Naive thymus-derived CD4-positive, alpha-beta T cell (primary cell): ENCODE measurements at regions of chr11 and their contacts with region 1.

Region 1: DNA sequence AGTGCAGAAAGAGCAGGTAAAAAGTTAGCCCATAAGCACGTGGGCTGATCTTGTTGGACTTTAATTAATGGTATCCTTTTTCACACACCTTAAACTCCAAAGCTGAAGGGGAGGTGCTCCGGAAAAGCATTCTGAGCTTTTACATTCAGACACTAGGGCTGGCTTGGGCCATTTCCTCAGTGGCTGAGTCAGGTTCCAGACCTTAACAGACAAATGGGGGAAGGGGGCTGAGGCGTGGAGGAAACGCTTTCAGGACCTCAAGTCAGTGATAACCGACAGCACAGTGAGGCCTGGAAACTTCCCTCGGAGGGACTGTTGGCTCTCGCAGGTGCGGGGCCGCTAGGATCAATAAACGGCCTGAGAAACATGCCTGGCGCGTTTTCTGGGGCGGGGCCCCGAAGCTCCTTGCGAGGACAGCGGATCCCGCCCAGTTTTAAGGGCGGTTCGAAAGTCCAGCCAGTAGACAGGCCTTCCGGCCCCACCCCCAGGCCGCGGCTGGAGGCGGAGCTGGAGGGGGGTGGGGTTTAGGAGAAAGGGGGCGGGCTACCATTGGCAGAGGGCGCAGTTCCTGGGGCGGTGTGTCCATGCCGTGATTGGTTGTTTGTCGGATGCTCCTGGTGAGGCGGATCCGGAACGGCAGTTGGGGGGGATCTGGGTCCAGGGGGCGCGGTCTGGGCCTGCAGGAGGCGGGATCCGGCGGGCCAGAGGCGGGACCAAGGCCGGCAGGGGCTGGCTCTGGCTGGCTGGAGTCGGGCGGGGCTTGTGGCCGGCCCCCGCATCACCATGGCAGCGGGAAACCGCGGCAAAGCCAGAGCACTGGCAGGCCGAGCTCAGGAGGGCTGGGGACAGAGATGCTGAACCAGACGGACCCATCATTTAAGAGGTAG is 8.0 kb downstream of the C11orf52 start:
- DNase-seq: peak; percentile 91 to 98 (median 96)
- ATAC-seq: peak; percentile 96
- H3K4me3 ChIP-seq: peak overlapping the region; percentile 61
- H3K4me3 Mint-ChIP-seq: peak overlapping the region; percentile 76 to 91 (median 87)
- H3K27ac ChIP-seq: peak overlapping the region; percentile 76
- H3K27ac Mint-ChIP-seq: peak overlapping the region; percentile 83 to 96 (median 92)
- H3K4me1 ChIP-seq: peaks cover 0 to 5% of the 10 kb centered on the region in 2 donors
- H3K4me1 Mint-ChIP-seq: peaks cover 0 to 19% (median 16%) of the 10 kb centered on the region in 7 donors
- H3K27me3 ChIP-seq: no peaks in the 10 kb centered on the region
- H3K27me3 Mint-ChIP-seq: peaks cover 0 to 5% (median 0%) of the 10 kb centered on the region in 5 donors

Region 2: GRCh38 chr11:111793863-111794262 is 132.9 kb before region 1 on chr11:
- CTCF ChIA-PET with region 1: no interaction called
- POLR2A ChIA-PET with region 1: no interaction called
- intact Hi-C with region 1: no loop called
- DNase-seq: no peak
- ATAC-seq: no peak
- H3K4me3 ChIP-seq: no peak overlapping the region
- H3K4me3 Mint-ChIP-seq: no peak overlapping the region
- H3K27ac ChIP-seq: no peak overlapping the region
- H3K27ac Mint-ChIP-seq: peak overlapping the region in 1 of 9 donors; percentile 14
- H3K4me1 ChIP-seq: no peaks in the 10 kb centered on the region
- H3K4me1 Mint-ChIP-seq: peaks cover 0 to 7% (median 3%) of the 10 kb centered on the region in 7 donors
- H3K27me3 ChIP-seq: no peaks in the 10 kb centered on the region
- H3K27me3 Mint-ChIP-seq: no peaks in the 10 kb centered on the region

Region 3: DNA sequence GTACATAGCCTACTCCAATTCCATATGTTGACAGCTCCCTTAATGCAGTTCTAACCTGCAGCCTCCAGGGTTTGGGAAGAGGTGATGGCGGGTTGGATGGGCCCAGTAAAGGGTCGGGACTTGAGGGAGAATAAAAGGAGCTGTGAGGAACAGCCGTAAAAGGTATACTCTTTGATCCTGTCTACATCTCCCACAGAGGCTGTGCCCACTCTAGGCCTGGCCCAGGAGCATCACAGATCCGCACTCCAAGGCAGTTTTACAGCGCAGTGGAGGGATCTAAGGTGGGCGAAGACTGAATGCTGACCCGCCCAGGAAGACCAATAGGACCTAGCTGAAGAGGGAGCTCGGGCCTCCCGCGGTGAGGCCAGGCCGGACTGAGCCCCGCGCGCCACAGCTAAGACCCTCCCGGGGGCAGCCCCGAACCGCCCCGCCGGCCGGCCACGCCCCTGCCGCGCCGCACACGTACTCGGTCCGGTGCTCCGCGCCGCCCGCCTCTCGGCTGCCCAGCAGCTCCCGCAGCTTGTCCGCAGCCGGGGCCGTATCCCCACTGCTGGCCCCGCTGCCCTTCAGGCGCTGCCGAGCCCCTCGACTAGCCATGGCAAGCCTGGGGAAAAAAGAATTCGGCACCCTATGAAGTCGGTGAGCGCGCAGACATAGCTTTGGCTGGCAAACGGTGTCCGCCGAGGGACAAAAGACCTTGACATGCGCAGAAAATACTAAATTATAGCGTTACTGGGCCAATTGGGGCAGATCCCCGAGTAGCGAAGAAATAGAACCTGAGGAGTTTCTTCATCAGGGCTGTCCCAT is 55.7 kb before region 1 on chr11 and contains the start of gene ALG9:
- CTCF ChIA-PET with region 1: interaction called, 6 read pairs
- POLR2A ChIA-PET with region 1: interaction called, 22 read pairs
- intact Hi-C with region 1: loop called (anchors 1 to 2 kb)
- DNase-seq: peak; percentile 79 to 94 (median 88)
- ATAC-seq: peak; percentile 91
- H3K4me3 ChIP-seq: peak within 1 kb of the TSS; percentile 74
- H3K4me3 Mint-ChIP-seq: peak within 1 kb of the TSS; percentile 86 to 96 (median 93)
- H3K27ac ChIP-seq: peak within 1 kb of the TSS; percentile 91
- H3K27ac Mint-ChIP-seq: peak within 1 kb of the TSS; percentile 87 to 98 (median 94)
- H3K4me1 ChIP-seq: peaks cover 8 to 10% of the 10 kb centered on the region in 2 donors
- H3K4me1 Mint-ChIP-seq: peaks cover 9 to 41% (median 34%) of the 10 kb centered on the region in 7 donors
- H3K27me3 ChIP-seq: no peaks in the 10 kb centered on the region
- H3K27me3 Mint-ChIP-seq: no peaks in the 10 kb centered on the region
- total RNA-seq, gene ALG9: 16.4 to 30.2 (median 29.2) TPM

Region 4: GRCh38 chr11:111982019-111982464 is 55.3 kb after region 1 on chr11:
- CTCF ChIA-PET with region 1: interaction called, 114 read pairs
- POLR2A ChIA-PET with region 1: interaction called, 7 read pairs
- intact Hi-C with region 1: loop called (anchors 1 kb)
- DNase-seq: peak; percentile 7 to 60 (median 44)
- ATAC-seq: peak; percentile 84
- H3K4me3 ChIP-seq: no peak overlapping the region
- H3K4me3 Mint-ChIP-seq: no peak overlapping the region
- H3K27ac ChIP-seq: no peak overlapping the region
- H3K27ac Mint-ChIP-seq: peak overlapping the region in 1 of 9 donors; percentile 22
- H3K4me1 ChIP-seq: peaks cover 0 to 3% of the 10 kb centered on the region in 2 donors
- H3K4me1 Mint-ChIP-seq: peaks cover 0 to 10% (median 7%) of the 10 kb centered on the region in 7 donors
- H3K27me3 ChIP-seq: peaks cover 0 to 3% of the 10 kb centered on the region in 2 donors
- H3K27me3 Mint-ChIP-seq: peaks cover 7 to 29% (median 27%) of the 10 kb centered on the region in 5 donors

Region 5: DNA sequence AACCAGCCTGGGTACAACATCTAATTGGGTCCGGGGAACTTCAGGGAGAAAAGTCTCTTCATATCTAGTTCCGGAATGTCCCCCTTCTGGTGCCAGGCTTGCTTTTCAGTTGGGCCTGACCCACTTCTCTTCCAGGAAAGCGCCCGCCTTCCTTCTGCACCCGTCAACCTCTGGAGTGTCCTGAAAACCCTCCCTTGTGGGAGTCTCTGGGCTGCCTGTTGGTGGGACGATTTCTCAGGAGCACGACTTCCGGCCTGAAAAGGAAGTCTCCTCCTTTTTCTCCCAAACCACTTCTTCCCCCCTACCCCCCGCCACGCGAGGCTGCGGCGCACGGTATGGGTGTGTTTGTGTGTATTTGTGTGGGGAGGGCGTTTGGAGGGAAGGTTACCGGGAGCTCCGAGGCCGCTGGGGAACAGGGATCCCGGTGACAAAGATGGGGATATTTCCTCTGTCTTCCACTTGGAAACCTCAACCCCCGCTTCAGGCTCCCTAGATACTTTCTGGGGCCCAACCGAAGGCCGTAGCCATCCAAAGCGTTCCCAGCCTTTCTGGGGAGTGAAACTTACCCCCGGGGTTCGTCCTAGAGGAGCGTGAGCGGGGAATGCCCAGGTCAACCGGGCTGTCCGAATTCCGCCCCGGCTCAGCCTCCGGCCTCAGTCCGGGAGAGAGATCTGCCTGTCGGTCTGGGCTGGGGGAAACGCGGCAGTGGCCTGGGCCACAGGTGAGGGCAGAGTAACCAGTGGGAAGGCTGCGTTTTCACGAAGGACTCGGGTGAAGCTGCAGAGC is 147.5 kb after region 1 on chr11 and contains the start of gene NKAPD1:
- CTCF ChIA-PET with region 1: interaction called, 3 read pairs
- POLR2A ChIA-PET with region 1: interaction called, 3 read pairs
- intact Hi-C with region 1: loop called (anchors 1 to 2 kb)
- DNase-seq: peak; percentile 64 to 88 (median 84)
- ATAC-seq: peak; percentile 94
- H3K4me3 ChIP-seq: peak within 1 kb of the TSS; percentile 97
- H3K4me3 Mint-ChIP-seq: peak within 1 kb of the TSS; percentile 80 to 98 (median 94)
- H3K27ac ChIP-seq: peak within 1 kb of the TSS; percentile 79
- H3K27ac Mint-ChIP-seq: peak within 1 kb of the TSS; percentile 84 to 96 (median 95)
- H3K4me1 ChIP-seq: peaks cover 5 to 11% of the 10 kb centered on the region in 2 donors
- H3K4me1 Mint-ChIP-seq: peaks cover 14 to 49% (median 40%) of the 10 kb centered on the region in 7 donors
- H3K27me3 ChIP-seq: no peaks in the 10 kb centered on the region
- H3K27me3 Mint-ChIP-seq: peaks cover 6 to 22% (median 12%) of the 10 kb centered on the region in 5 donors
- total RNA-seq, gene NKAPD1: 12.4 to 22.9 (median 19.7) TPM

Region 6: DNA sequence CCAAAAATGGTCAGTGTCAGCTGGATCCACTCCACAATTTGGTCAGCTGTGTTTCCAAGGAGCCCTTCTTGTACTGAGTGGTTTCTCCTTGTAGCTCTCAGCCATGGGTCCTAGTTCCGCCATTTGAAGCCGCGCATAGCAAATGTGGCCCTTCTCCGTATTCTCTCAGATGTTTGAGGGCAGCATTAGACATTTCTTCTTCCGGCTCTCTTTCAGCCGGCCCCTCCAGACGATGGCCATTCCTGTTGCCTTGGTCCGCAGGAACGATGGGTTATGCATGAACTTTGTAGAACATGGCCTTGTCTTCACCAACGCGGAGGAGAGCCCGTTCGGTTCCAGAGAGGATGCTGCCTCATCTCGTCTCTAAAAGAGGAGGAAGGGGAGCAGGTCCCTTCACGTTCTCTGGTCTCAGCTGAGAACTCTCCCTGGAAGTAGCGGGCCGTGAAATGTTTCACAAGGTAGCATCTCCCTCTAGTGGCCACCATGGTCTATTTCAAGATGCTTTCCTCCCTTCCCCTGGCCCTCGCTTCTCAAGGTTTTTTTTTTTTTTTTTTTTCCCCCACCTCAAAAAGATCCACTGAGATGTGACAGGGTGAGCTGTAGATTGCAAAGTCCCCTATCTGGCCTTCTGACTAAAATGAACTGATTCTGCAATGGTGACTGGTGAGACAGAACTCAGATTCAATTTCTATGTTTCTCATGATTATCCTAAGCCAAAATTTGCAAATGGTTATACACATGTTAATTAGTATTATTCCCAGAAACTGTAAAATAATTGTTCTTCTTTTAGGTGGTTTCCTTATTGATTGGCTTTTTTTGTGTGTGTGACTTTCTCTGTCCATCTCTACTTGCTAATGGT is 353.7 kb after region 1 on chr11:
- CTCF ChIA-PET with region 1: interaction called, 4 read pairs
- POLR2A ChIA-PET with region 1: no interaction called
- intact Hi-C with region 1: loop called (anchors 1 to 5 kb)
- DNase-seq: peak; percentile 27 to 81 (median 73)
- ATAC-seq: peak; percentile 95
- H3K4me3 ChIP-seq: peak overlapping the region; percentile 78
- H3K4me3 Mint-ChIP-seq: peak overlapping the region; percentile 91 to 97 (median 94)
- H3K27ac ChIP-seq: peak overlapping the region; percentile 31
- H3K27ac Mint-ChIP-seq: peak overlapping the region; percentile 46 to 86 (median 66)
- H3K4me1 ChIP-seq: no peaks in the 10 kb centered on the region
- H3K4me1 Mint-ChIP-seq: peaks cover 7 to 36% (median 10%) of the 10 kb centered on the region in 7 donors
- H3K27me3 ChIP-seq: no peaks in the 10 kb centered on the region
- H3K27me3 Mint-ChIP-seq: no peaks in the 10 kb centered on the region